ENCODE measurements at regions of chr11 and their contacts with region 1.

Region 1: GRCh38 chr11:34890812-34891211 is 25.4 kb downstream of the APIP start:
- DNase-seq: peak; percentile 21
- H3K4me3 ChIP-seq: no peak overlapping the region
- H3K27ac ChIP-seq: no peak overlapping the region
- H3K4me1 ChIP-seq: no peaks in the 10 kb centered on the region
- H3K27me3 ChIP-seq: no peaks in the 10 kb centered on the region
- CTCF ChIP-seq: peak; percentile 39 to 54

Region 2: GRCh38 chr11:34366522-34366921 is 524.3 kb before region 1 on chr11:
- CTCF ChIA-PET with region 1: no interaction called
- dilution Hi-C with region 1: no loop called
- in situ Hi-C with region 1: no loop called
- intact Hi-C with region 1: loop called (anchors 5 kb)
- DNase-seq: no peak
- H3K4me3 ChIP-seq: no peak overlapping the region
- H3K27ac ChIP-seq: no peak overlapping the region
- H3K4me1 ChIP-seq: peaks cover 5% of the 10 kb centered on the region
- H3K27me3 ChIP-seq: no peaks in the 10 kb centered on the region
- CTCF ChIP-seq: peak; percentile 53 to 69

Region 3: GRCh38 chr11:34565417-34566207 is 325.2 kb before region 1 on chr11:
- CTCF ChIA-PET with region 1: no interaction called
- dilution Hi-C with region 1: no loop called
- in situ Hi-C with region 1: no loop called
- intact Hi-C with region 1: loop called (anchors 5 kb)
- DNase-seq: no peak
- H3K4me3 ChIP-seq: no peak overlapping the region
- H3K27ac ChIP-seq: no peak overlapping the region
- H3K4me1 ChIP-seq: peaks cover 19% of the 10 kb centered on the region
- H3K27me3 ChIP-seq: no peaks in the 10 kb centered on the region
- CTCF ChIP-seq: peak; percentile 47 to 51

Region 4: GRCh38 chr11:34653826-34654490 is 236.9 kb before region 1 on chr11:
- CTCF ChIA-PET with region 1: interaction called, 4 read pairs
- dilution Hi-C with region 1: no loop called
- in situ Hi-C with region 1: no loop called
- intact Hi-C with region 1: loop called (anchors 1 kb)
- DNase-seq: peak; percentile 98
- H3K4me3 ChIP-seq: no peak overlapping the region
- H3K27ac ChIP-seq: peak overlapping the region; percentile 78
- H3K4me1 ChIP-seq: peaks cover 42% of the 10 kb centered on the region
- H3K27me3 ChIP-seq: no peaks in the 10 kb centered on the region
- CTCF ChIP-seq: peak in 1 of 2 donors; percentile 50

Region 5: DNA sequence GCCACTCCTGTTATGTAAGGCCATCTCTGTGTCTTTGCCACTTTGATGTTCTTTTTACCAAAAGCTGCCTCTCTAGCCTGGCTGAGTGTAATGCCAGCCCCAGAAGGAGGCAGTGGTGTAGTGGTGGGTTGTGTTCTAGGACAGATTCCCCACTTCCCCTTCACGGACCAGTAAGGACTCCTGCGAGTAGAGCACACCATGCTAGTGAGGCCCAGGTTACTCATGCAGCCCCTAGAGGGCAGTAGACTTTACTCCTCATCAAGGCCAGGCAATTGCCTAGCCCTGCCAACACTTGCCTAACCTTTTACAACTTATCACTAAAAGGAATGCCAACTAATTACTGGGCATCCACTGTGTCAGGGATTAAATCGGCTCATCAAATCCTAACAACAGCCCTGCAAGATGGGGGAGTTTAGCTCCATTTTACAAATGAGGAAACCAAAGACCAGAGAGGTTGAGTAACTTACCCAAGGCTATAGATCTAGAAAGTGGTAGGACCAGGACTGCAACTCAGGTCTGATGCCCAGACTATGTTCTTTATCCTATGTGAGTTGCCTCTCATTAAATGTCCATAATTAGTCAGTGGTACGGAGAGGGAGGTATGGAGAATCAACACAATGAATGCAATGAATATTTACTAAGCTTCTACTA is 50.0 kb before region 1 on chr11:
- CTCF ChIA-PET with region 1: no interaction called
- dilution Hi-C with region 1: no loop called
- in situ Hi-C with region 1: no loop called
- intact Hi-C with region 1: loop called (anchors 2 kb)
- DNase-seq: peak; percentile 25
- H3K4me3 ChIP-seq: no peak overlapping the region
- H3K27ac ChIP-seq: no peak overlapping the region
- H3K4me1 ChIP-seq: no peaks in the 10 kb centered on the region
- H3K27me3 ChIP-seq: no peaks in the 10 kb centered on the region
- CTCF ChIP-seq: peak; percentile 54 to 56

Region 6: GRCh38 chr11:35006389-35007128 is 115.7 kb after region 1 on chr11:
- CTCF ChIA-PET with region 1: no interaction called
- dilution Hi-C with region 1: no loop called
- in situ Hi-C with region 1: no loop called
- intact Hi-C with region 1: no loop called
- DNase-seq: no peak
- H3K4me3 ChIP-seq: no peak overlapping the region
- H3K27ac ChIP-seq: no peak overlapping the region
- H3K4me1 ChIP-seq: peaks cover 25% of the 10 kb centered on the region
- H3K27me3 ChIP-seq: no peaks in the 10 kb centered on the region
- CTCF ChIP-seq: no peak

Measured in mammary epithelial cell (primary cell).